GM10248 (cell line): ENCODE measurements at regions of chr17 and their contacts with region 1.

Region 1: GRCh38 chr17:2244545-2245525 is 58.8 kb downstream of the SMG6 start:
- DNase-seq: peak; percentile 78
- CTCF ChIP-seq: peak; percentile 100

Region 2: DNA sequence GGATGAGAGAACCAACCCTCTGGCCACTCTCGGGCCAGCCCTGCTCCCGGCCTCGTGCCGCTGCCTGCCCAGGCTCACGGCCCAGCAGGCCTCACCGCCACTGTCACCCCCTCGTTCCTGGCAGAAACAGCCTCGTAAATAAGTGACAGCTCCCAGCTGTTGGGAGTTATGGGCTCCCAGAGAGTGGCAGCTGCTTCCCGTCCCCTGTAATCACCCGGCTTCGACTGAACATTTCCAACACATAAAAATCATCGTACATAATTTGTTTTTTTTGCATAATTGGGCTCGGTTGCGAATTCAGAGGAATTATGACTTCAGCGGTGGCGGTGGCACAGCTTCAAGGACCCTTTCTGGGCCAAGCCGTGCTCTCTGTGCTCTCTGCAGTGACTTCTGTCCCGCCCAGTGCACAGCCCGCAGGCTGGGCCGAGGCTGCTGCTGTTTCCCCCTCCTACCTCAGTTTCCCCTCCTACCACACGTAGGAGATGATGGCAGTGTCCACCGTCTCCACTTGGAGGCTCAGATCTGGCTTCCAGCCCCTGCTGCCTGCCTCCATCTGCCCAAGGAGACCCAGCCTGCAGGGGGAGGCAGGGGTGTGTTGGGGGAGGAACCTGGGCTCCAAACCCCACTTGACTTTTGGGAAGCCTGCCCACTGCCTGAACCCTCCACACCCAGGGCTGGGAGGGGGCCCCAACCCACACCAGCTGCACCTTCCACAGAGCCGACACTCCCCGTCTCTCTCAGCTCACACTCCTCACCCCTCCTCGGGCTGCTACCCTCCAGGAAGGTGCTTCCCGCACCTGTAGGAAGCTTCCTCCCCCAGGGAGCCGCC is 304.6 kb before region 1 on chr17:
- CTCF ChIA-PET with region 1: no interaction called
- POLR2A ChIA-PET with region 1: no interaction called
- DNase-seq: no peak
- CTCF ChIP-seq: no peak

Region 3: DNA sequence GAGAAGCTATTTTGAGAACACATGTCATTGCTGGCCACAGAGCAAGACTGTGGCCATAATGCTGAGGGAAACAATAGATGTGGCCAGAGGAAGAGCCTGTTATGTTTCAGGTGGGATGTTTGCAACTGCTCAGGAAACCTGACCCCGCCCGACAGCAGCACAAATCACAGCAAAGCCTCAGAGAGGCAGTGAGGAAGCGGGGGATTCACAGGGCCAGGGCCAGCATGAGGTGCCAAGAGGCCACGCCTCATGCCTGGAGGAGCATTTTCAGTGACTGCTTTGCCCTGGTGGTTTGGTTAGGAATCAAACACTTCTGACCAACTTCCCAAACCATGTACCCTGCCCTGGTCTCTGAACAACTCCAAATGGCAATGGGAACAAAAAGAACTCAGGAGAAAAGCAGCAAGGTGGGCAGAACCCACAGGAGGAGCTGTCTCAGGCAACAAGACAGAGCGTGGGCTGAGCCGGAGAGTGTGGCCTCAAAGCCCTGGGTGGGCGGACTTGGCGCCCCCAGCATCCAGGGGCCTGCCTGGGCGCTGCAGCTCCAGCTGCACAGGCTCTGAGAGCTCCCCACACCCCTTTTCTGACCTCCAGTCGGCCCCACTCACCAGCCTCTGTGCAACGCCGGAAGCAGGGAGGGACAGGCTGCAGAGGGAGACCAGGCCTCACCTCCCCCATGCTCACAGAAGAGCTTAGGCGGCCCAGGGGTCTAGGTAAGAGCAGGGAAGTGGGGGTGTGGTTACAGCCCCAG is 169.3 kb before region 1 on chr17:
- CTCF ChIA-PET with region 1: interaction called, 107 read pairs
- POLR2A ChIA-PET with region 1: no interaction called
- DNase-seq: peak; percentile 37
- CTCF ChIP-seq: no peak

Region 4: GRCh38 chr17:2102931-2103809 is 141.7 kb before region 1 on chr17:
- CTCF ChIA-PET with region 1: interaction called, 19 read pairs
- POLR2A ChIA-PET with region 1: no interaction called
- DNase-seq: no peak
- CTCF ChIP-seq: no peak

Region 5: GRCh38 chr17:2179615-2180295 is 65.1 kb before region 1 on chr17:
- CTCF ChIA-PET with region 1: interaction called, 14 read pairs
- POLR2A ChIA-PET with region 1: no interaction called
- DNase-seq: no peak
- CTCF ChIP-seq: no peak

Region 6: DNA sequence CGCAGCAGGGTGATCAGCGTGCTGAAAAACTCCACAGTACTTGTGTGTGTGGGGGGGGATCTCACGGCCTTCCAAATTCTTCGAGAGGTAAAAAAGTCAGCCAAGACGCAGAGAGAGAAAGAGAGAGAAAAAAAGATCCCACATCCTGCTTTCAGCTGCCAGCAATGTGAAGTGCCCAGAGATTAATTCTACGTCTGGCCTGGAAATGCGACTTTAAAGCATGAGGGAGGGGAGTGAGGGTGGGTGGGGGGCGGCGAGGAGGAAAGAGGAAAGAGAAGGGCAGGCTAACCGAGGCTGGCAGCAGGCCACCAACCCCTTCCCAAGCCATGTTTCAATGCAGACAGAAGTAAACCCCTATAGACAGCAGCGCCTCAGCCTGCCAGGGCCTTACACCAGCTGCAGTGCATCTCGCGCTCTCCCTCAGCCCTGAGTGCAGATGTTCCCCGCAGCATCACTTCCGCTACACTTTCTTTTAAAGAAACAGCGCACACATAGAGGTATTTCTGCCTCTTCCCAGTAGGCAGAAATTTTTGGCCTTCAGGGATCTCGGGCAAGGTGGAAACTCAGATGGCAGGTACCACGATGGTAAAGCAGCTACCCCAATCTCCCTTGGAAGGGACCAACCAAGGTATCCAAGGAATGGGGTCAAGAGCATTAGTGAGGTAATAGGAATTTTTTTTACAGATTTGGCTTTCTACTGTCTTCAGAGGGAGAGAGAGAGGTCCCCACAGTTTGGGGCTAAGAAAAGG is 29.0 kb before region 1 on chr17:
- CTCF ChIA-PET with region 1: interaction called, 76 read pairs
- POLR2A ChIA-PET with region 1: no interaction called
- DNase-seq: peak; percentile 83
- CTCF ChIP-seq: no peak

Region 7: DNA sequence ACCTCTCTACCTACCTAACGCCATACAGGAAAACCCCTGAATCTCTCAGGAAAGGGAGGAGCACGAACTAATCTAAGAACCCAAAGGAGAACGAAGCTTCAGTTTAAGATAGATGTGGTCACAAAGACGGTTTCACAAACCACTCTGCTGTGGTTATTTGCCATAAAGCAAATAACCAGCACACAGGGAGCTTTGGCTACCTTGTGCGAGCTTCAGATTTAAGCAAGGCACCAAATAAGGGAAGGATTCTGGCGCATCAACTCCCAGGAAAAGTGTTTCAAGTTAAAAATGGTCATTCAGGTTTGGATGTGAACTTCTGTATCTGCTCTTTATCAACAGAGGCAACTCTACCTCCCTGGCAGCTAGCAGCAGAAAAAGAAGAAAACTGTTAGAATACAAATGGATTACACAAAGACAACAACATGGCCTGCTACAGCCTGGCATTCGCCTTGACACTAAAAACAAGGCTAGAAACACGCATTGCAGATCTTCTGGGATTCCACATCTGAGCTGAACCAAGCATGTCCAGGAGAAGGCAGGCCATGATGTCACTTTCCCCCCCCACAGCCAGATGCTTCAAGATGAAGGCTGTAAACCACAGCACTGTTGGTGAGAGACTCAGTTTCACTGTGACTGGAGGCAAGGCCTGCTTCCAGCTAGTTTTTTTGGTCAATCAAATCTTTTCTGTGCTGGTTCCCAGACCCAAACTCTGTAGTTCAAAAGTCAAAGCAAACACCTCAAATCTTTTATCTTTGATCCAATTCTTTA is 15.1 kb after region 1 on chr17:
- CTCF ChIA-PET with region 1: interaction called, 50 read pairs
- POLR2A ChIA-PET with region 1: interaction called, 19 read pairs
- DNase-seq: peak; percentile 73
- CTCF ChIP-seq: no peak